WTC11 (cell line): ENCODE measurements at regions of chr5 and their contacts with region 1.

Region 1: GRCh38 chr5:10353241-10354047 is at the start of gene MARCHF6:
- DNase-seq: peak; percentile 96
- ATAC-seq: peak; percentile 83
- H3K4me3 Mint-ChIP-seq: peak within 1 kb of the TSS; percentile 98
- H3K27ac Mint-ChIP-seq: peak within 1 kb of the TSS; percentile 99
- H3K4me1 Mint-ChIP-seq: peaks cover 41% of the 10 kb centered on the region
- H3K27me3 Mint-ChIP-seq: peaks cover 14% of the 10 kb centered on the region
- CTCF ChIP-seq: no peak
- total RNA-seq, gene MARCHF6: 117 to 122 TPM (median 121 TPM) in 3 replicates

Region 2: GRCh38 chr5:10333154-10334006 is 20.1 kb before region 1 on chr5:
- CTCF ChIA-PET with region 1: no interaction called
- POLR2A ChIA-PET with region 1: interaction called, 10 read pairs
- DNase-seq: peak; percentile 65
- ATAC-seq: peak; percentile 87
- H3K4me3 Mint-ChIP-seq: peak overlapping the region; percentile 90
- H3K27ac Mint-ChIP-seq: no peak overlapping the region
- H3K4me1 Mint-ChIP-seq: no peaks in the 10 kb centered on the region
- H3K27me3 Mint-ChIP-seq: peaks cover 73% of the 10 kb centered on the region
- CTCF ChIP-seq: no peak

Region 3: DNA sequence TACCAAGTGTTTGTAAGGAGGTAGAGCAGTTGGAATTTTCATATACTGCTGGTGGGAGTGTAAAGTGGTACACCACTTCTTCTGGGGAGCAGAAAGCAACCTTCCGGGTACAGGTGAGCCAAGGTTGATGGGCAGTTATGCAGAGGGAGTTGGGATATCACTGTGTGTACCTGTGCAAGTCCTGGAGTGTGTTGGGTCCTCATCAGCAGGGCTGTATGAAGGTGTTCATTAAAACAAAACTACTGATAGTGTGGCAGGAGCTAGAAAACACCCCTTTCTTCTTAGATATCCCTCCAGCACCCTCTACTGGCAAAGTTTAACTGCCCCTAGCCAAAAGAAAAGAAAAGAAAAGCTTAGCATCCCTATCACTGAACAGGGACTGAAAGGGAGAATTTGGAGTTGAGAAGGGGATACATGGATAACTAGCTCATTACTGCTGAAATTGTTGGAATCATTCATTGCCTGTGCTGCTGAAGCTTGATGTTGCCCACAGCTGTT is 10.8 kb after region 1 on chr5:
- CTCF ChIA-PET with region 1: interaction called, 20 read pairs
- POLR2A ChIA-PET with region 1: interaction called, 5 read pairs
- DNase-seq: no peak
- ATAC-seq: peak; percentile 41
- H3K4me3 Mint-ChIP-seq: no peak overlapping the region
- H3K27ac Mint-ChIP-seq: no peak overlapping the region
- H3K4me1 Mint-ChIP-seq: peaks cover 10% of the 10 kb centered on the region; the same call in 1 of the 2 replicates
- H3K27me3 Mint-ChIP-seq: no peaks in the 10 kb centered on the region
- CTCF ChIP-seq: no peak; the same call in 1 of the 2 replicates

Region 4: DNA sequence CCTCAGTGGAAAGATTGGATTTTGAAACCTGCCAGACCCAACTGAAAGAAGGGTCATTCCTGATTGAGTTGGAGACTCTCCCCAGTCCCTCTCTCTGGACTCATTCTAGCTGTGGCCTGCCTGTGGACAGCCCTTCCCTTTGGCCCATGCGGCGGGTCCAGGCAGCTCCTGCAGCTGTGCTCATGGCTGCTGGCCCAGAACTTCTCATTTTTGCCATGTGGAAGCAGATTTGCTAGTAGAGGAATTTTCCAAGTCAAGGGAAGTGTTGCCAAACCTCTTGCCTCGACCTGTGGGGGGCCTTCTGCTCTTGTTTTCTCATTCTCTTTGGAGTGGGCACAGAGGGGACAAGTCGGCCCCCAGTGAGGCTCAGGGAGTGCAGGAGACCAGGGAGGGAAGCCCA is 299.6 kb after region 1 on chr5:
- CTCF ChIA-PET with region 1: no interaction called
- POLR2A ChIA-PET with region 1: no interaction called
- DNase-seq: no peak
- ATAC-seq: no peak
- H3K4me3 Mint-ChIP-seq: no peak overlapping the region
- H3K27ac Mint-ChIP-seq: no peak overlapping the region
- H3K4me1 Mint-ChIP-seq: peaks cover 12% of the 10 kb centered on the region
- H3K27me3 Mint-ChIP-seq: no peaks in the 10 kb centered on the region
- CTCF ChIP-seq: no peak